Activated T-helper 2 cell treated with anti-CD3 and anti-CD28 coated beads, Interferon-gamma antibody, Interleukin-2, Interleukin-4, amounts not matched to agents 10 μg/mL and 5 μg/mL and 100 μg/mL, durations not matched to agents 14 hours and 24 hours and 36 hours (primary cell): ENCODE measurements at regions of chr6 and their contacts with region 1.

Region 1: GRCh38 chr6:6793388-6794250 is 205.1 kb downstream of the LY86 start:
- DNase-seq: no peak
- H3K4me3 Mint-ChIP-seq: peak overlapping the region; percentile 41
- H3K27ac Mint-ChIP-seq: peak overlapping the region; percentile 23
- H3K4me1 Mint-ChIP-seq: peaks cover 55% of the 10 kb centered on the region
- H3K27me3 Mint-ChIP-seq: no peaks in the 10 kb centered on the region

Region 2: GRCh38 chr6:6659600-6660327 is 133.9 kb before region 1 on chr6:
- intact Hi-C with region 1: loop called (anchors 2 kb)
- DNase-seq: no peak
- H3K4me3 Mint-ChIP-seq: no peak overlapping the region
- H3K27ac Mint-ChIP-seq: peak overlapping the region; percentile 99
- H3K4me1 Mint-ChIP-seq: peaks cover 72% of the 10 kb centered on the region
- H3K27me3 Mint-ChIP-seq: no peaks in the 10 kb centered on the region

Region 3: GRCh38 chr6:6811151-6812002 is 17.8 kb after region 1 on chr6:
- intact Hi-C with region 1: loop called (anchors 2 kb)
- DNase-seq: no peak
- H3K4me3 Mint-ChIP-seq: peak overlapping the region; percentile 82
- H3K27ac Mint-ChIP-seq: peak overlapping the region; percentile 84
- H3K4me1 Mint-ChIP-seq: peaks cover 24% of the 10 kb centered on the region
- H3K27me3 Mint-ChIP-seq: peaks cover 25% of the 10 kb centered on the region

Region 4: GRCh38 chr6:6840831-6841291 is 47.2 kb after region 1 on chr6:
- intact Hi-C with region 1: no loop called
- DNase-seq: no peak
- H3K4me3 Mint-ChIP-seq: no peak overlapping the region
- H3K27ac Mint-ChIP-seq: no peak overlapping the region
- H3K4me1 Mint-ChIP-seq: no peaks in the 10 kb centered on the region
- H3K27me3 Mint-ChIP-seq: peaks cover 41% of the 10 kb centered on the region

Region 5: DNA sequence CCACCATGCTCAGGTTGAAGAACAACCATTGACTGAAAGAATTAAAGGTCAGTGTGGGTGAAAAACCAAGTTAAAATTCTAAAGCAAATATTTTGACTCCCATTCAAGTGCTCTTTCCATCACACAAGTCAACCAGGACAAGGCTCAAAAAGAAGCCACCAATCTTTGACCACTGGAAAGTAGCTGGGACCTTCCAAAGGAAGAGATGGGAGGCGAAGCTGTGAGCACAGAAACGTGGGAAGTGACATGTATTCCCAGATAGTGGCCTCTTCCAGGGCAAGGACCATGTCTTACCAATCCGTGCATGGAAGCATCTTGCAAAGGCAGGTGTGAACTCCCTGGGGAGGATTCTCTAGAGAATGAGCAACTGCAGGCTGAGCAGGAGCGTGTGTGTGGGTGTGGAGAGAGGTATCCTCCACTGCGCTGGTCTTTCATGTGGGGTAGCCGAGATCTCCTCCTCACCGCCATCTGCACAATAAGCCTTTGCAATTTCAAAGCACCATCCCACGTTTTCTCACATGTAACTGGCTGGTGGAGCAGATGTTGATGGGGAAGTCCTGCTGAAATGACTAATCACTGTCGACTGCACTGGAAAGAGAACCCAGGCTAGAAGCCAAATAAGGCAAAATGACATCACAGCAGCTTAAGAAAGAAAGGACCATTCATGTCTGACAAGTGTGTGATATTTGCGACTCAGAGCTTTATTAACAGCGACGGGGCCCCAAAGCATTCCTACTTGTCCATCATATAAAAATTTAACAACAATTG is 124.8 kb after region 1 on chr6:
- intact Hi-C with region 1: loop called (anchors 1 kb)
- DNase-seq: peak; percentile 24
- H3K4me3 Mint-ChIP-seq: no peak overlapping the region
- H3K27ac Mint-ChIP-seq: peak overlapping the region; percentile 16
- H3K4me1 Mint-ChIP-seq: peaks cover 24% of the 10 kb centered on the region
- H3K27me3 Mint-ChIP-seq: peaks cover 31% of the 10 kb centered on the region

Region 6: GRCh38 chr6:7137335-7138045 is 343.9 kb after region 1 on chr6:
- intact Hi-C with region 1: loop called (anchors 10 kb)
- DNase-seq: peak; percentile 66
- H3K4me3 Mint-ChIP-seq: peak overlapping the region; percentile 84
- H3K27ac Mint-ChIP-seq: peak overlapping the region; percentile 99
- H3K4me1 Mint-ChIP-seq: peaks cover 63% of the 10 kb centered on the region
- H3K27me3 Mint-ChIP-seq: no peaks in the 10 kb centered on the region